Spleen (tissue), 13 donors: ENCODE measurements at regions of chr16 and their contacts with region 1.

Region 1: GRCh38 chr16:66735891-66736290 is 15.5 kb downstream of the DYNC1LI2 start:
- DNase-seq: no peak
- H3K4me3 ChIP-seq: no peak overlapping the region
- H3K27ac ChIP-seq: no peak overlapping the region
- H3K4me1 ChIP-seq: peaks cover 5 to 40% (median 16%) of the 10 kb centered on the region in 6 donors
- H3K27me3 ChIP-seq: no peaks in the 10 kb centered on the region
- CTCF ChIP-seq: no peak
- POLR2A ChIP-seq: no peak

Region 2: DNA sequence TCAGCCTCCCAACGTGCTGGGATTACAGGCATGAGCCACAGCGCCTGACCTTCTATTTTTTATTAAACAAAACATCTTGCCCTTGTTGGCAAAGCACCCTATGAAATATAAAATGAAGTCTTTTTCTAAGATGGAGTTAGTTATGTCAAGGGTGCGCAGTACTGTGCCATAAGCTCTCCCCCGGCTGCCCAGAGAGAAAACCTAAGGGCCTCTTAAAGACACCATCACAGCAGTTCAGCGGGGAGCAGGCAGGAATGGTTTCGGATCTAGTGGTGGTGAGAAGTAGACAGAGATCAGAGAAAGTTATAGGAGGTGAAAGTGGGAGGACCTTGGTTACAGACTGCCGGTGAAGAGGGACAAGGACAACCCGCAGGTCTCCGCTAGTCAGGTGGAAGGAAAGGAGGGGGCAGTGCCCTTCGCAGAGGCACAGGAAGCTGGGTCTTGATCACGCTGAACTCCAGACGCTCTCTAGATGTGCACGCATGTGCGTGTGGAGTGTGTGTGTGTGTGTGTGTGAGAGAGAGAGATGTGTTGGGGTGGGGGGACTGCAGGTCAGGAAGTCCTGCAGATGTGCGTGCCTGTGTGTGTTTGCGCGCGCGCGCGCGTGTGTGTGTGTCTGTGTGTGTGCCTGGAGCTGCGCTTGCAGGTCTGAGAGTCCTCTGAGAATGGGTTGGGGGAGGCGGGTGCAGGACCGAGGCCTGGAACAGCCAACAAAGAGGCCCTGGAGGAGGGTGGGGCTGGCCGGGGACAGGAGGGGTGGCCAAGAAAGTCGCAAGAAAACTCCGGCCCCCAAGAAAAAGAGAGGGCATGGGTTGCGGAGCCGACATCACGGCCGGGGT is 132.1 kb before region 1 on chr16:
- intact Hi-C with region 1: no loop called
- DNase-seq: peak; percentile 92
- H3K4me3 ChIP-seq: peak overlapping the region; percentile 68 to 94 (median 78)
- H3K27ac ChIP-seq: peak overlapping the region; percentile 78 to 94 (median 88)
- H3K4me1 ChIP-seq: peaks cover 30 to 58% (median 53%) of the 10 kb centered on the region in 6 donors
- H3K27me3 ChIP-seq: peaks cover 0 to 25% (median 0%) of the 10 kb centered on the region in 7 donors
- CTCF ChIP-seq: no peak
- POLR2A ChIP-seq: no peak

Region 3: DNA sequence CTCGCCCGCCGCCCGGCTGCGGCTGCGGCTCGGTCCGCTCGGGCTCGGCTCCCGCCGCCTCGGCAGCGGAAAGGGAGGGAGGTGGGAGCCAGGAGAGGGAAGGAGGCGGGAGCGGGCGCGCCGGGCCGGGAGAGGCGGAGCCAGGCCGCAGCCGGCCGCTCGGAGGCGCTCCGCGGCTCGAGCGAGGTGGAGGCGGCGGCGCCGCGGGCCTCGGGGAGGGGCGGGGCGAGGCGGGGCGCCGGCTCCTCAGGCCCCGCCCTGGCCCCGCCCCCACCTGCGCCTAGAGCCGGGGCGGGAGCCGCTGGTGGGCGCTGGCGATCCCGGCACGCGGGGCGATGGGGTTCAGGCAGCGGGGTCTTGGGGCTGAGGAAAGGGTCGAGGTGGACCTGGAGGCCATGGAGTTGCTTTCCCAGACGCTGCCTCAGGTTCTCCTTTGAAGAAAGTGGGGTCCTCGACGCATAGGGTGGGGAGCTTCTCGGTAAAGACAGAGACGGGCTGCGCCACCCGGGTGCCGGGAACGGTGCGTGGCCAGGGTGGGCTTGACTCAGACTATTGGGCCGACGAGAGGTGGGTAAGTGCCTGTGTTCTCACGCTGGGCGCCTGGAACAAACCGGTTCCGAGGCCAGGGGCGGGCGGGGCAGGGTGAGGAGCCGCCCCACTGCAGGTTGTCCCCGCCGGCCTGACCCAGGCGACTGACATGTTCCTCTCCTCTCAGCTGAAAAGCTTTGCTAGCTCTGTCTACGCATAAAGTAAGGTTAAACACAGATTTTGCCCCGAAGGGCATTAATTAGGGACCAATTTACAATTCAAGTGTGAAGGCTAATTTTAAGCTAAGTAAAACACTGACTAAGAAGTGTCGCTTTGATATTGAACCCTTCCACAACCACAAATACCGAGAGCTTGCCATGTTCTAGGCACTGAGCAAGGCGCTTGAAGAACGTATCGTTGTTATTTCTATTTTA is 38.9 kb before region 1 on chr16 and contains the start of gene CMTM4:
- intact Hi-C with region 1: no loop called
- DNase-seq: peak; percentile 95
- H3K4me3 ChIP-seq: peak within 1 kb of the TSS; percentile 52 to 86 (median 59)
- H3K27ac ChIP-seq: peak within 1 kb of the TSS in 5 of 8 donors; percentile 60 to 78 (median 67)
- H3K4me1 ChIP-seq: peaks cover 8 to 56% (median 27%) of the 10 kb centered on the region in 6 donors
- H3K27me3 ChIP-seq: peaks cover 0 to 41% (median 0%) of the 10 kb centered on the region in 7 donors
- CTCF ChIP-seq: peak in 2 of 11 experiments; percentile 18 to 19
- POLR2A ChIP-seq: no peak
- total RNA-seq, gene CMTM4: 3.8 to 10.2 (median 7.4) TPM

Region 4: DNA sequence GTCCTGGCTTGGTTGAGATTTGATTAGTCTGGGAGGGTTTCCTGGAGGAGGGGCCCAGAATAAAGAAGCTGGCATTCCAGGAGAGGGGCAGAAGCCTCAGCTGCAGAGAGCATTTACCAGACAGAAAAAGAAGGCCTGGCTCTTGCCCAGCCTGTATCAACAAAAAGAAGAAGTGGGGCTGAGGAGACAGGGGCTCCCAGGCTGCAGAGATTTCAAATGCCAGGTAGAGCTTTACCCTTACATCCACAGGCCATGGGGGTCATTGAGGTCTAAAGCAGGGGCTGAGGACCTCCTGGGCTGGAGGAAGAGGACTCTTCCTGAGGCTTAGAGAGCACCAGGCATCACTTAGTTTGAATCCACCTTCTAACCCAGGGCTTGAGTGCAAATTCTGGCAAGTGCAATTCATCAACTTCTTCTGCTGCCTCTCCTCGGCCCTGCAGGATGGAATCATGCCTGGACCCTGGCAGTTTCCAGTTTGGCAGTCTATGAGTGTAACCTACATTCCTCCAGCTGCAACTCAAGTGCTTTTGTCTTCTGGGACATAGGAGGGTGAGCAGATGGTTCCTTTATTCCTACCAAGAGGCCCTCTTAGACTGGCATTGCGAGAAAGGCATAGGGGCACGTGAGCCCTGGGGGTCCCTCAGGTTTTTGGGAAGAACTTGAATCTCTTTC is 123.6 kb after region 1 on chr16:
- intact Hi-C with region 1: loop called (anchors 10 kb)
- DNase-seq: no peak
- H3K4me3 ChIP-seq: no peak overlapping the region
- H3K27ac ChIP-seq: no peak overlapping the region
- H3K4me1 ChIP-seq: no peaks in the 10 kb centered on the region
- H3K27me3 ChIP-seq: no peaks in the 10 kb centered on the region
- CTCF ChIP-seq: no peak
- POLR2A ChIP-seq: no peak